Posterior vena cava (tissue), 2 donors: ENCODE measurements at regions of chr4 and their contacts with region 1.

Region 1: DNA sequence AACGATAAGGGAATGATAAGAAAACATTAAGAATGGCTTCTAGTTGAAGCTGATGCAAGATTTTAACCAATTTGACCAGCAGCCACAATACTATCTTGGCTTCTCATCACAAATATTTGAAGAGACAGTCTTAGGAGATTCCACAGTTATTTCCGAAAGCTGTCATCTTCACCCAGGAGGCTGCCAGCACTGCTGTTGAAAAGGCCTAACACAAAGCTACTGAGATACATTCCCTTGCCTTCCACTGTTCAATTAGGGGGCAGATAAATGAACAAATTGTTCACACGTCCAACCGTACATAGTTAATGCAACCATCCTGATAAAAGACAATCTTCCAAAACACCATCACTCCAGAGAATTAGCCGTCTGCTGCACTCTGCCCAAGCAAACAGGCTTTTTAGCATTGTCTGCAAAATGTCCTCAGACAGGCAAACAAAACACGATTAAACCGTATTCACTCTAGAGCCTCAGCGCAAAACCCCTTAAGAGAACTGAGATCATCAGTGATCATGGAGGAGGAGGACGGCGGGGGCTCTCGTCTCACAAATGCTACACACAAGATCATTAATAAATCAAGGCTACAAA is 189.8 kb upstream of the PSAPL1 start:
- DNase-seq: no peak

Region 2: GRCh38 chr4:7451434-7451789 is 173.1 kb before region 1 on chr4:
- intact Hi-C with region 1: loop called in 1 of 2 experiments (anchors 1 kb)
- DNase-seq: no peak

Region 3: GRCh38 chr4:7593646-7594412 is 30.7 kb before region 1 on chr4:
- intact Hi-C with region 1: loop called in 1 of 2 experiments (anchors 1 kb)
- DNase-seq: no peak

Region 4: GRCh38 chr4:7638984-7639789 is 14.7 kb after region 1 on chr4:
- intact Hi-C with region 1: no loop called
- DNase-seq: no peak